Activated CD4-positive, alpha-beta memory T cell treated with anti-CD3 and anti-CD28 coated beads, Interleukin-2, amount 10 ng/mL, durations not matched to agents 7 days and 5 days (primary cell): ENCODE measurements at regions of chr14 and their contacts with region 1.

Region 1: DNA sequence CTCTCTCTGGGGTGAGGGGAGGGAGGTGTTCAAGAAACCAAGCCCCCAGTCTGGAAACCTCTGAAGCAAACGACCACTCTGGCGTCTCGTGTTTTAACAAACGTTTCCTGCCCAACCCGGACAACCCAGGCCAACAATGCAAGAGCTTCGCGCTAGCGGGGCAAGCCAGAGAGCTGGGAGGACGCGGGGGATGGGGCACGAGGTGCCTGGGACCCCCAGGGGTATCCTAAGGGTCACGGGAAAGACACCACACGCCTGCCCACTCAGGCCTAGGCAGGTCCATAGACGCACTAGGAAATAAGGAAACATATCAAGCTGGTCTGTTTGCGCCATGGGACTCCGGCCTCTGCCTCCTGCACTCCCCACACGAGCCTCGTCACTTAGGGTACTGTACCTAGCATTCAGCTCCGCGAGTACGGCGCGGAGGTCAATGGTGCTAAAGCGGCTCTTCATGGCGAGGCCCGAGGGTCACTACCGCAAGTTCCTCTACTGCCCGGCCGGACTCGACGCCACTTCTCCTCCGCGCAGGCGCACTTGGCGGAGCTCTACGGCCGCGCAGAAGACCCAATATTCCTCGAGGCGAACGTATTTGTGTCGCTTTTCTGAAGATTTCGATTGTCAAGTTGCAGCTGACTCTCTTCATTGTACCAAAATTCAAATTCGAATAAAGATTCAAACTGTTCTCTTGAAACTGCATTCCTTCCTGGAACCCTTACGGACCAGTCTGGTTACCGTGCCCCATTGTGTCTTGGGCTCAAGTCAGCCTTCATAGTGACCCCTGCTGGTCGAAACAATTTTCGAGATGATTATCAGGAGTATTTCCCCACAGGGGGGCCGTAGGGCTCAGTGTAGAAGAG is at the start of gene NEMF:
- DNase-seq: peak; percentile 80
- H3K4me3 Mint-ChIP-seq: peak within 1 kb of the TSS; percentile 96
- H3K27ac Mint-ChIP-seq: peak within 1 kb of the TSS; percentile 94
- H3K4me1 Mint-ChIP-seq: peaks cover 46% of the 10 kb centered on the region
- H3K27me3 Mint-ChIP-seq: no peaks in the 10 kb centered on the region
- total RNA-seq, gene NEMF: 64.7 to 73.3 TPM

Region 2: DNA sequence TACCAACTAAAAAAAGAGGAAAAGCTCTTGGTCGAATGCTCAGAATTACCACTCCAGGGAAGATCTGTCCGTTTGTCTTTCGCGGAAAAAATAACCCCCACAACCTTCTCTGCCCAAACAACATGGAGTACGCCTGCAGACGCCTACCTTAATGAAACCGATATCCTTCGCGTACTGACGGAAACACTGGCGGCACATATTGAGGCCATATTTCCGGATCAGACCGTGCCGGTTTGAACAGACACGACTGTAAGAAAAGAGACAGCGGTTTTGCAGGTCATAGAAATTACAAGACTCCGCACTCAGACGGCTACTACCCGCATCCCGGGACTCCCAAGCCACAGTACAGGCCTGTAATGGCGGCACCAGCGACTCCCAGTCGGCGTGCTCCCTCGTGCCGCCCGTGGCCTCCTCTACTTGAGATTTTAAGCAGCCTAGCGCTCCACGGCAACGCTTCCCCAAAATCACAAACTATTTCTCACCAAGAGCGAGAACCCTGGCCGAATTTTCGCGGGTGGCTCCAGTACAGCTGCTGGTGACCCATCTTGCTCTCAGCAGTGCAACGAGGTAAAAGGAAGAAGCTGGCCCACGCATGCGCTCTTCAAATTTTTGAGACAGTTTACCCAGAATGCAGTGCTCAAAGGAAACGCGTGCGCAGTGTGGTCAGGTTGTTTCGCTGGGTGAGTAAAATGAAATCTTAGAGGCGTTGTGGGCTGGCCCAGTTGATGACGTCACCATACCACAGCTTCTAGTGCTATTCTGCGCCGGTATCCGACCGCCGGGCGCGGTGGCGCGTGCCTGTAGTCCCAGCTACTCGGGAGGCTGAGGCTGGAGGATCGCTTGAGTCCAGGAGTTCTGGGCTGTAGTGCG is 266.5 kb before region 1 on chr14 and contains the start of gene RPS29:
- CTCF ChIA-PET with region 1: interaction called, 7 read pairs
- POLR2A ChIA-PET with region 1: interaction called, 18 read pairs
- DNase-seq: peak; percentile 99
- H3K4me3 Mint-ChIP-seq: peak within 1 kb of the TSS; percentile 85
- H3K27ac Mint-ChIP-seq: peak within 1 kb of the TSS; percentile 99
- H3K4me1 Mint-ChIP-seq: peaks cover 50% of the 10 kb centered on the region
- H3K27me3 Mint-ChIP-seq: no peaks in the 10 kb centered on the region
- total RNA-seq, gene RPS29: 1,659 to 1,700 TPM

Region 3: GRCh38 chr14:49633640-49634546 is 218.6 kb before region 1 on chr14:
- CTCF ChIA-PET with region 1: interaction called, 40 read pairs
- POLR2A ChIA-PET with region 1: interaction called, 25 read pairs
- DNase-seq: peak; percentile 95
- H3K4me3 Mint-ChIP-seq: peak overlapping the region; percentile 88
- H3K27ac Mint-ChIP-seq: peak overlapping the region; percentile 81
- H3K4me1 Mint-ChIP-seq: peaks cover 45% of the 10 kb centered on the region
- H3K27me3 Mint-ChIP-seq: no peaks in the 10 kb centered on the region

Region 4: GRCh38 chr14:49828640-49829039 is 23.9 kb before region 1 on chr14:
- CTCF ChIA-PET with region 1: interaction called, 15 read pairs
- POLR2A ChIA-PET with region 1: interaction called, 4 read pairs
- DNase-seq: no peak
- H3K4me3 Mint-ChIP-seq: no peak overlapping the region
- H3K27ac Mint-ChIP-seq: no peak overlapping the region
- H3K4me1 Mint-ChIP-seq: peaks cover 5% of the 10 kb centered on the region
- H3K27me3 Mint-ChIP-seq: no peaks in the 10 kb centered on the region

Region 5: GRCh38 chr14:49892636-49893308 is 40.2 kb after region 1 on chr14 and contains the start of gene ARF6:
- CTCF ChIA-PET with region 1: interaction called, 8 read pairs
- POLR2A ChIA-PET with region 1: interaction called, 16 read pairs
- DNase-seq: peak; percentile 98
- H3K4me3 Mint-ChIP-seq: peak within 1 kb of the TSS; percentile 96
- H3K27ac Mint-ChIP-seq: peak within 1 kb of the TSS; percentile 100
- H3K4me1 Mint-ChIP-seq: peaks cover 20% of the 10 kb centered on the region
- H3K27me3 Mint-ChIP-seq: no peaks in the 10 kb centered on the region
- total RNA-seq, gene ARF6: 198 to 199 TPM

Region 6: GRCh38 chr14:50060871-50061663 is 208.5 kb after region 1 on chr14:
- CTCF ChIA-PET with region 1: interaction called, 26 read pairs
- POLR2A ChIA-PET with region 1: interaction called, 26 read pairs
- DNase-seq: peak; percentile 59
- H3K4me3 Mint-ChIP-seq: peak overlapping the region; percentile 93
- H3K27ac Mint-ChIP-seq: peak overlapping the region; percentile 100
- H3K4me1 Mint-ChIP-seq: peaks cover 85% of the 10 kb centered on the region
- H3K27me3 Mint-ChIP-seq: no peaks in the 10 kb centered on the region

Region 7: DNA sequence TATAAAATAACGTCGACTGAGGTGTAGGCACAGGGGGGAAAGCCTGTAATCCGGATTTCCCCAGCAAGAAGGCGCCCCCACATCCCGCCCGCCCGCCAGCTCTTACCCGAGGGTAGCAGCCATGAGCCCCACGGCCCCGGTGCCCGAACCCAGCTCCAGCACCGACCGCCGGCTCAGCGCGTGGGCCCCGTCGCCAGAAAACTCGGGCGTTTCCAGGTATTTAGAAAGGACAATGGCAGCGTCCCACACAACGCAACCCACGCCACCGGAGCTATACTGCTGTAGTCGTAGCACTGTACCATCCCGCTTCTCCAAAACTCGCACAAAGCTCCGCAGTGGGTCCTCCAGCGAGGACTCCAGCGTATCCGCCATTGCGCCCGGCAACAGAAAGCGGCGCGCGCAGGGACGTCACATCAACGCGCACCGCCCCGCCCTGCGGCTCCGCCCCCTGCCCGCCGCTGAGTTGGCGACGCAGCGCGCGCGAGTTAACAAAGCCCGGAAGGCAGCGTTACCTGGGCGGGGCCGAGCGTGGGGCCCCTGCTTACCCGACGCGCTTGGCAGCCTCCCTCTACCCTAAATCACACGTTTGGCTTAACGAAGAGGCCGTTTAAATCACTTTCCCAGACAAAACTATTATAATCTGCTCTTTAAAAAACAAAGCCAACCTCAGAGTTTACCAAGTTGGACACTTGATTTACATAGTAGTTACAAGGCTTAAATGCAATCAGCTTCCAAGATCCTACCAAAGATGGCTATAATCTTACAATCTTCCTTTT is 263.8 kb after region 1 on chr14 and contains the start of gene VCPKMT:
- CTCF ChIA-PET with region 1: interaction called, 30 read pairs
- POLR2A ChIA-PET with region 1: interaction called, 44 read pairs
- DNase-seq: peak; percentile 97
- H3K4me3 Mint-ChIP-seq: peak within 1 kb of the TSS; percentile 99
- H3K27ac Mint-ChIP-seq: peak within 1 kb of the TSS; percentile 97
- H3K4me1 Mint-ChIP-seq: peaks cover 40% of the 10 kb centered on the region
- H3K27me3 Mint-ChIP-seq: no peaks in the 10 kb centered on the region
- total RNA-seq, gene VCPKMT: 7.5 to 9.5 TPM